ENCODE measurements at regions of chr3 and their contacts with region 1.

Region 1: GRCh38 chr3:187738331-187739093 is 6.8 kb downstream of the BCL6 start:
- DNase-seq: peak; percentile 92
- H3K4me3 Mint-ChIP-seq: peak overlapping the region; percentile 98
- H3K27ac Mint-ChIP-seq: peak overlapping the region; percentile 99
- H3K4me1 Mint-ChIP-seq: peaks cover 51% of the 10 kb centered on the region
- H3K27me3 Mint-ChIP-seq: no peaks in the 10 kb centered on the region

Region 2: DNA sequence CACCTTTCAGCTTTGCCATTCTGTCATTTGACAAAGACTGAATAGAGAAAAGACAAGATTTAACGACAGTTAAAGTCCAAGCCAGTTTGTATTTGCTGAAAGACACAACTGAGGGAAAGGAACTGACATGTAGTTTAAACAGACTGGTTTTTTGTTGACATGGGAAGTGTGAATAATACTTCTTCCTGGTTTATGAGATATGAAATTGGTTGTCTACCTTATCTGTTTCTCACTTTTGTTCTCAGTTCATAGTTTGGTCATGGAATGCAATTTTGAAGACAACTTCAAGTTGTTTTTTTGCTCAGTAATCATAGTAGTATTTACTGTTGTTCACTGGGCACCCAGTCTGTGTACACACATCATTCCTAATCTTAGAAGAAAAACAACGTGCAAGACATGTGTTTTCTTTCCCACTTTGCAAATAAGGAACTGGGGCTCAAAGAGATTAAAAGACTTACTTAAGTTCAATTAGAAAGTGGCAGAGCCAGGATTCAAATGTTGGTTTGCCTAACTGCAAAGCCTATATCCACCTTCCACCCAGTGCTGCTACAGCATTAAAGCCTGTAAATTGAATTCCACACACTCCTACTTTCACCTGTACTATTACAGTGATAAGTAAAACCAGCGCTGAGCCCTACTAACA is 519.0 kb after region 1 on chr3:
- intact Hi-C with region 1: loop called (anchors 1 kb)
- DNase-seq: no peak
- H3K4me3 Mint-ChIP-seq: no peak overlapping the region
- H3K27ac Mint-ChIP-seq: peak overlapping the region; percentile 85
- H3K4me1 Mint-ChIP-seq: peaks cover 47% of the 10 kb centered on the region
- H3K27me3 Mint-ChIP-seq: no peaks in the 10 kb centered on the region

Region 3: DNA sequence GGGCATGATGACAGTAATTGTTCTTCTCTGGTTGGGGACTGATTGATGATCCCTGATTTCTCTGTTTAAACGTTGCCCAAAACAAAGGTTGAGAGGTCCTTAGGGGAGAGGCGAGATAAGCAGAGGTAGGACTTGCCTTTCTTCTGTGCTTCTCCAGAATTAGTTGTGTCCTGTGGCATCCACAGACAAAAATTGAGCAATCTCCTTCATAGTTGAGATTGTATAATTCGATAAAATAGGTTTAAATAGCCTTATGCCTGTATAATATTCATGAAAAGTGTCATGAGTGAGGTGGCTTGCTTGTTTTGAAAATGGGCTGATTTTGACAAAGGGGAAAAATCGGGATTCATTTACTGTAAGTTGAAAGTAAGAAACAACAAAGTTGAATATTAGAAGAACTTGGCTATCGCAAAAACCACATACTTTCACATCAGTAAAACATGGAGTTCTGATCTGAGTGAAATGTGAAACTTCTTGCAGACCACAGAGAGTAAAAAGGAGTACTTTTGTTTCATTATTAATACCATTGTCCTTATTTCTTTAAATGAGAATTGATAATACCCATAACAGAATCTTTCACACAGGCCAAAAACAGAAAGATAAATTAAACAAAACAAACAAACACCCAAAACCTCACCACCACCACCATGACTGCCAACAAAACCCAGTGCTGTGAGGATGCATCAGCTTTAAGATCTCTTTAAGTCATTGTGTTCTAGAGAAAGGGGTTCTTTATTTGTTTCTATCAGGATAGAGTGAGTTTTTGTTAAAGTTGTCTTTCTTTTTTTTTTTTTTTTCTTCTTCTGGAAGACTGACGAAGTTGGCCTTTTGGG is 571.1 kb after region 1 on chr3:
- intact Hi-C with region 1: loop called (anchors 1 kb)
- DNase-seq: peak; percentile 79
- H3K4me3 Mint-ChIP-seq: peak overlapping the region; percentile 62
- H3K27ac Mint-ChIP-seq: peak overlapping the region; percentile 87
- H3K4me1 Mint-ChIP-seq: peaks cover 22% of the 10 kb centered on the region
- H3K27me3 Mint-ChIP-seq: peaks cover 3% of the 10 kb centered on the region

Region 4: GRCh38 chr3:188400494-188401243 is 662.2 kb after region 1 on chr3:
- intact Hi-C with region 1: loop called (anchors 2 kb)
- DNase-seq: peak; percentile 81
- H3K4me3 Mint-ChIP-seq: peak overlapping the region; percentile 18
- H3K27ac Mint-ChIP-seq: peak overlapping the region; percentile 68
- H3K4me1 Mint-ChIP-seq: peaks cover 62% of the 10 kb centered on the region
- H3K27me3 Mint-ChIP-seq: no peaks in the 10 kb centered on the region

Region 5: DNA sequence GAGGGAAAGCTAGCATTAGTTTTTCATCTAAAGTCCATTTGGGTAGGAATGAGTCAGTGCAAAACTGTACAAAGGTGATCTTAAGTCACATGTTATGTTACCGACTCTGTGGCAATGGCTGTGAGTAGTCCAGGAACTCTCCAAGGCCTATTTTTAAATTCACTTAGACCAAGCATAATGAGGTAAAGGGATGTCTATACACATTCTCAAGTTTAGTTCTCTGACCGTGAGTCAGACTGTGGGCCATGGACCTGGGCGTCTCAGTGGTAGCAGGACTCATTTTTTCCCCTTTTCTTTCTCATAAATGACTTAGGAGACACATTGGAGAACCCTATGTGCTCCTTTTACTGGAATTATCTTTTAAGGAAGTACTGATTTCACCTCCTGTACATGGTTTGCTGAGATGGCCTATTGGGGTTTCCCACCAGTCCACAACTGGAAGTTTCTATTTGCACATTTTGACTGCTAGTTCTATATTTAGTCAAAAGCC is 944.6 kb after region 1 on chr3:
- intact Hi-C with region 1: loop called (anchors 2 kb)
- DNase-seq: no peak
- H3K4me3 Mint-ChIP-seq: no peak overlapping the region
- H3K27ac Mint-ChIP-seq: peak overlapping the region; percentile 47
- H3K4me1 Mint-ChIP-seq: peaks cover 28% of the 10 kb centered on the region
- H3K27me3 Mint-ChIP-seq: no peaks in the 10 kb centered on the region

Region 6: DNA sequence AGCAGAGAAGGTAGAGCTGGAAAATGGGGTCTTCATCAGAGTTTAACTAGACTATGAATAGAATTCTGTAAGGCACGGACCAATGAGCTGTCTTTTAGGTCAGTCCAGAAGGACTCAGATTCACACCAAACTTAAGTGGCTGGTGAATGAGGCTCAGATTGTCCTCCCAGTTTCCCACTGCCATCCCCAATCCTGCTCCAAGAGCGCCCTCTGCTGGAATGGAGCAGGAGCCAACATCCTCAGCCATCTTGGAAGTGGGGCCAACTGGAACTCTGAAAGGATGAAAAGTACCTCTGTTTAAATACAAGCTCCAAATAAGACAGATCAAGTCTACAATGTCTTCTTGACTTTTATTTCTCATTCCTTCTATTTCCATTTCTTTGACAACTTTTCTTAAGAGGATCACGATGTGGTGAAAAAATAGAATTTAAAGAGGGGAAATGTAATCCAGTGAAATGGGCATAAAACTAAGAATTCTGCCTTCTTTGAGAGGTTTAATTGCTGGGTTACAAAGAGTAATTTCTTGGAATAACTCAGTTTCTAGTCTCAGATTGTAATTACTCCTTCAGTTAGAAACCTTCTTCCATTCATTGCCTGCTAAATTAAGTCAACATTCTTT is 1216.2 kb after region 1 on chr3:
- intact Hi-C with region 1: loop called (anchors 1 kb)
- DNase-seq: peak; percentile 94
- H3K4me3 Mint-ChIP-seq: no peak overlapping the region
- H3K27ac Mint-ChIP-seq: peak overlapping the region; percentile 10
- H3K4me1 Mint-ChIP-seq: peaks cover 27% of the 10 kb centered on the region
- H3K27me3 Mint-ChIP-seq: peaks cover 6% of the 10 kb centered on the region

Region 7: DNA sequence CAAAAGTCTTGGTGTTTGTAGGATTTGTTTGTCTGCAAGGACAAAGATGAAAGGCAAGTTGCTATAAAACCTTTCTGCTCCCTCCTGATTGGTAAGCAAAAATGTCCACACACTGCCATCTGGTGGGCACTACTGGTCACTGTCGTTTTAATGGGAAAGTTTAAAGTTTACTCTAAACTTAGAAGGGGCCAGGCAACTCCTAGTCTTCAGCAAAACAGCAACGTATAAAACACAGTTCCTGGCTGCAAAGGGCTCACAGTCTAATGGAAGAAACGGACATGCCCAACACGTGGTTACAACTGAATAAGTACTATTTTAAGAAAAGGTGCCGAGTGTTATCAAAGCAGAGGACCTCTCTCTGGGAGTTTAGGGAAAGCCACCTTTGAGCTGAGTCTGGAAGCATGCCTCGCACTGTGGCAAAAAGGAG is 1409.6 kb after region 1 on chr3:
- intact Hi-C with region 1: loop called (anchors 1 kb)
- DNase-seq: peak; percentile 89
- H3K4me3 Mint-ChIP-seq: no peak overlapping the region
- H3K27ac Mint-ChIP-seq: no peak overlapping the region
- H3K4me1 Mint-ChIP-seq: peaks cover 28% of the 10 kb centered on the region
- H3K27me3 Mint-ChIP-seq: peaks cover 10% of the 10 kb centered on the region

Measured in activated CD4-positive, alpha-beta T cell treated with anti-CD3 and anti-CD28 coated beads, Interleukin-2, amount 10 ng/mL, durations not matched to agents 24 days and 14 days (primary cell).